ENCODE measurements at regions of chr3 and their contacts with region 1.

Region 1: DNA sequence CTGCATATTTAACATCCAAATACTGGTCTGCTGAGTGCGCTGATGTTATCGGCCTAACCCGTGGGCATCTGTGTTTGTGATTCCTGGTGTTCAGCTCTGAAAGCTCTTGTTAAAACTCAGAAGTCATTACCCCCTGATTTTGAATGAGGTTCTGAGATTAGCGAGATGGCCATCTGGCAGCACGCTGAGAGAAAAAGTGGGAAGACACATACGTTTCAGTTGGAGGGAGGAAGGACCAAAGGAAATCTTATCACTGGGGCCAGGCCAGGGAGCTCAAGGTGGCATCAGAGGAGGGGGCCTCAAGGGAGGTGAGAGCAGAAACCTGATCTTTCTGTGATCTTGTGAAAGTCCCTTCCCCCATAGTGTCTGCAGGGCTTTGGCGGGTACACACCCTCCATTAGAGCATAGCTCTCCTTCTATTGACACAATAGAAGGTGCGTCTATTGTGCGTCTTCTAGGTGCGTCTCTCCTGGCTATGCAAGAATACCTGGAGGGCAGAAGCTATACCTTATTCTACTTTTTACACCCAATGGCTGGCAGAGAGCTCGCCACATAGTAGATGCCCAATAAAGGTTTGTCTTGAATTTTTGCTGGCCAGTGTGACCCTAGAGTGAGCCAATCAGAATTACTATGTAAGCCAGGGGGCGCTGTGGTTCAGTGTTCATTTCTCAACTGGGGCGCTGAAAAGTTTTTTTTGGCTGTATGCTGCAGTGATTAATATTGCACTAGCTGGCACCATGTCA is 182.4 kb downstream of the SHQ1 start:
- DNase-seq: peak in 1 of 2 experiments; percentile 87
- H3K4me3 ChIP-seq: no peak overlapping the region
- H3K27ac ChIP-seq: no peak overlapping the region
- H3K4me1 ChIP-seq: no peaks in the 10 kb centered on the region; a peak in 1 of 7 replicates
- H3K27me3 ChIP-seq: no peaks in the 10 kb centered on the region
- CTCF ChIP-seq: peak; percentile 15 to 71 (median 70)
- EP300 ChIP-seq: no peak
- POLR2A ChIP-seq: no peak
- RAD21 ChIP-seq: peak; percentile 81 to 86

Region 2: GRCh38 chr3:72441284-72441994 is 224.4 kb before region 1 on chr3:
- CTCF ChIA-PET with region 1: no interaction called
- POLR2A ChIA-PET with region 1: no interaction called
- DNase-seq: no peak
- H3K4me3 ChIP-seq: no peak overlapping the region
- H3K27ac ChIP-seq: no peak overlapping the region
- H3K4me1 ChIP-seq: peaks cover 2 to 12% (median 4%) of the 10 kb centered on the region in 4 experiments; a peak in 6 of 7 replicates
- H3K27me3 ChIP-seq: no peaks in the 10 kb centered on the region
- CTCF ChIP-seq: no peak
- EP300 ChIP-seq: no peak
- POLR2A ChIP-seq: no peak
- RAD21 ChIP-seq: no peak

Region 3: DNA sequence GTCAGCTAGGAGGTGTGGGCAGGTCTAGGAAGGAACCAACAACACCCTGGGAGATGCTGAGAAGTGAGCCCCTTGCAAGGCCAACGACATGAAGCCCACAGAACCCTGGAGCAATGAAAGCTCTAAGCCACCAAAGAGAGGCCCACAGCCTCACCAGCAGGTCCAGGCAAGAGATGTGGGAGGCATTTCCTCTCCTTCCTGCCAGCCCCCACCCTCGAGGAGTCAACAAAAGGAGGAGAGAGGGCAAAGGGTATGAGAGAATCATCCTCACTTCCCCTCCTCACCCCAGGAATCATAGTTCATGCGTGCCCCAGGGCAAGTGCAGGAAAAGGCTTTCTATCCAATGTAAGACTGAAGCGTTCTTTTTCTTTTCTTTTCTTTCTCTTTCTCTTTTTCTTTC is 13.5 kb before region 1 on chr3:
- CTCF ChIA-PET with region 1: interaction called, 39 read pairs
- POLR2A ChIA-PET with region 1: no interaction called
- DNase-seq: no peak
- H3K4me3 ChIP-seq: no peak overlapping the region
- H3K27ac ChIP-seq: no peak overlapping the region
- H3K4me1 ChIP-seq: peaks cover 0 to 2% (median 0%) of the 10 kb centered on the region in 4 experiments; a peak in 1 of 7 replicates
- H3K27me3 ChIP-seq: no peaks in the 10 kb centered on the region; a peak in 1 of 7 replicates
- CTCF ChIP-seq: no peak
- EP300 ChIP-seq: no peak
- POLR2A ChIP-seq: no peak
- RAD21 ChIP-seq: no peak

Region 4: GRCh38 chr3:72690629-72691028 is 24.8 kb after region 1 on chr3:
- CTCF ChIA-PET with region 1: interaction called, 11 read pairs
- POLR2A ChIA-PET with region 1: no interaction called
- DNase-seq: no peak
- H3K4me3 ChIP-seq: no peak overlapping the region
- H3K27ac ChIP-seq: no peak overlapping the region
- H3K4me1 ChIP-seq: peaks cover 0 to 5% (median 2%) of the 10 kb centered on the region in 4 experiments; a peak in 1 of 7 replicates
- H3K27me3 ChIP-seq: no peaks in the 10 kb centered on the region
- CTCF ChIP-seq: no peak
- EP300 ChIP-seq: no peak
- POLR2A ChIP-seq: no peak
- RAD21 ChIP-seq: no peak

Region 5: GRCh38 chr3:72811551-72811950 is 145.7 kb after region 1 on chr3:
- CTCF ChIA-PET with region 1: interaction called, 27 read pairs
- POLR2A ChIA-PET with region 1: no interaction called
- DNase-seq: no peak
- H3K4me3 ChIP-seq: 0 out of 8 replicates have a peak overlapping the region, but pooled peaks of 1 of the 4 experiments have one; percentile 0
- H3K27ac ChIP-seq: no peak overlapping the region
- H3K4me1 ChIP-seq: peaks cover 0 to 19% (median 11%) of the 10 kb centered on the region in 4 experiments; a peak in 6 of 7 replicates
- H3K27me3 ChIP-seq: no peaks in the 10 kb centered on the region
- CTCF ChIP-seq: peak in 2 of 3 experiments; percentile 29 to 41; a peak in 2 of 4 replicates
- EP300 ChIP-seq: no peak
- POLR2A ChIP-seq: no peak
- RAD21 ChIP-seq: peak; percentile 56 to 64

Region 6: GRCh38 chr3:73215281-73215680 is 549.4 kb after region 1 on chr3:
- CTCF ChIA-PET with region 1: no interaction called
- POLR2A ChIA-PET with region 1: no interaction called
- DNase-seq: no peak
- H3K4me3 ChIP-seq: no peak overlapping the region
- H3K27ac ChIP-seq: no peak overlapping the region
- H3K4me1 ChIP-seq: no peaks in the 10 kb centered on the region
- H3K27me3 ChIP-seq: no peaks in the 10 kb centered on the region
- CTCF ChIP-seq: no peak
- EP300 ChIP-seq: no peak
- POLR2A ChIP-seq: no peak
- RAD21 ChIP-seq: no peak